ENCODE measurements at regions of chr14 and their contacts with region 1.

Region 1: GRCh38 chr14:91350813-91351511 is 66.7 kb downstream of the CCDC88C start:
- DNase-seq: peak; percentile 90
- ATAC-seq: peak; percentile 74
- H3K4me3 Mint-ChIP-seq: peak overlapping the region; percentile 71
- H3K27ac Mint-ChIP-seq: peak overlapping the region; percentile 97
- H3K4me1 Mint-ChIP-seq: peaks cover 96% of the 10 kb centered on the region
- H3K27me3 Mint-ChIP-seq: no peaks in the 10 kb centered on the region

Region 2: GRCh38 chr14:91164685-91165084 is 186.3 kb before region 1 on chr14:
- CTCF ChIA-PET with region 1: no interaction called
- DNase-seq: no peak
- ATAC-seq: no peak
- H3K4me3 Mint-ChIP-seq: no peak overlapping the region
- H3K27ac Mint-ChIP-seq: peak overlapping the region; percentile 60
- H3K4me1 Mint-ChIP-seq: no peaks in the 10 kb centered on the region
- H3K27me3 Mint-ChIP-seq: no peaks in the 10 kb centered on the region

Region 3: DNA sequence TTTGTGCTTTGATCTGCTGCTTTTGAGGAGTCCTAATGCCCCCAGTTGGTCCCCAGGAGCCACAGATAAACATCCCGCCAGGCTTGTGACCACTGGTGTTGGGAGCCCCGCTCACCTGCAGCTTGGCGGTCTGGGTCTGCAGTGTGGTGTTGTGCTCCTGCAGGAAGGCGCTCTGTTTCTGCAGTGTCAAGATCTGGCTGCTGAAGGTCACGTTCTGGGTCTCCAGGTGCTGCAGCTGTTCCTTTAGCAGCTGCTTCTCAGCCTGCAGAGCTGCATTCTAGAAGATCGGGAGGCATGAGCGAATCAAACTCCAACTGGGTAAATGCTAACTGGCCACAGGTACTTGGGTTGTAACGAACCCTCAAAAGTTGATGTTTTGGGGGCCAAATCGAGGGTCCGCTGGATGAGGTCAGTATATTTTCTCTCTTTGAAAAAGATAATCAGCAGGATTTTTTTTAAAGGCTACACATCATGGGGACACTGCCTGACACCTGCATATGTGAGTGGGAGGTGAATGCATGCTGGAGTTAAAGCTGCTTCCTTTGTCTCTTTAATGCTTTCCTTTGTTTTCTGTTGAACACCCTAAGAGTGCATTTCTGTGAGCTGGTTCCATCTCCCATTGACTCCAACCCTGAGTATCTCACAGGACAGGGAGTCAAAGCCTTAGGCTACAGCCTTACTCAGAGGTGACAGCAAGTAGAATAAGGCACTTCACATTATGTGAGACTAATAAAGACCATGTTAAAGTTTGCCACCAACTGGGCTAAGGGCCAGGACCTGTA is 45.1 kb before region 1 on chr14:
- CTCF ChIA-PET with region 1: no interaction called
- DNase-seq: no peak
- ATAC-seq: no peak
- H3K4me3 Mint-ChIP-seq: no peak overlapping the region
- H3K27ac Mint-ChIP-seq: peak overlapping the region; percentile 44
- H3K4me1 Mint-ChIP-seq: peaks cover 49% of the 10 kb centered on the region
- H3K27me3 Mint-ChIP-seq: no peaks in the 10 kb centered on the region

Region 4: GRCh38 chr14:91317381-91318308 is 33.3 kb before region 1 on chr14:
- CTCF ChIA-PET with region 1: interaction called, 73 read pairs
- DNase-seq: peak; percentile 91
- ATAC-seq: peak; percentile 60
- H3K4me3 Mint-ChIP-seq: peak overlapping the region; percentile 51
- H3K27ac Mint-ChIP-seq: peak overlapping the region; percentile 96
- H3K4me1 Mint-ChIP-seq: peaks cover 78% of the 10 kb centered on the region
- H3K27me3 Mint-ChIP-seq: no peaks in the 10 kb centered on the region

Region 5: DNA sequence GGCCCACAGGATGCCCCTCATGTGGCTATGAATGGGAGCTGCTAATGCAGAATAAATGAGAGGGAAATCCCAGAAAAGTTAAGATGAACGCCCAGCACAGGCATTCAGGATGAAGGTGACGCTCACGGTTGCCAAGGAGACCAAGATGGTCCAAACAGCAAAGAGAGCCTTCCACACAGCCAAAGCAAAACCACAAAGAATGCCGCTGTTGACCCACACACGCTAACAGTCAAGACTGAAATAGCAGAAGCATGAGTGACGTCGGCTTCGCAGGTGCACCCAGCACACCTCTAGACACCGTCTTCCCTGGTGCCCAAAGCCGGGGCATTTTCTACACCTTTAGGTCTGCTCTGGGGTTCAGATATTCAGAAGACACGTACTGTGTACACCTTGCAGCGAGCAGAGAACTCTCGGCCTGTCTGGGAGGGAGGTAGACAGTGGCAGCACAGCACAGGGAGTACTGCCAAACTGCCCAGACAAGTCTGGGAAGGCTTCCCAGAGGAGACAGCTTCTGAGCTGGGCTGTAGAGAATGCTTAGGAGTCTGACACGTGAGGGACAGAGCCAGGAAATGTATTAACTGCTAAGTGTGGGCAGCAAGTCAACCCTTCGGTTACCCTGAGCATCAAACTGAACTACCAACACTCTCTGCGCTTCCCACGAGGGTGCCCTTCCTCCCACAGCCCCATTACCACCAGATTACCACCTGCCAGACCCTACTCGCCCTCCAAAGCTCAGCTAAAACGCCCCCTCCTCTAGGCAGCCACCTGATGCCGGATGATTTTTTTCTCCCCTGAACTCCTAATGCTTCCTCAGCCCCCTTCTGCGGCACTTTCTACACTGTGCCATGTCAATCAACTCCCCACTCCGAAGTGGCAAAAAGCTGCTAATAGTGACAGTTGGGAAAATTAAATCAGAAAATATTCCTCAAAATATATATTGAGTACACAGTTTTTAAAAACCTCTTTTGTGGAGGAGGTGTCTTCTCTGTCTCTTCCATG is 16.5 kb after region 1 on chr14:
- CTCF ChIA-PET with region 1: interaction called, 238 read pairs
- DNase-seq: peak; percentile 82
- ATAC-seq: peak; percentile 58
- H3K4me3 Mint-ChIP-seq: peak overlapping the region; percentile 47
- H3K27ac Mint-ChIP-seq: peak overlapping the region; percentile 70
- H3K4me1 Mint-ChIP-seq: peaks cover 89% of the 10 kb centered on the region
- H3K27me3 Mint-ChIP-seq: no peaks in the 10 kb centered on the region

Region 6: DNA sequence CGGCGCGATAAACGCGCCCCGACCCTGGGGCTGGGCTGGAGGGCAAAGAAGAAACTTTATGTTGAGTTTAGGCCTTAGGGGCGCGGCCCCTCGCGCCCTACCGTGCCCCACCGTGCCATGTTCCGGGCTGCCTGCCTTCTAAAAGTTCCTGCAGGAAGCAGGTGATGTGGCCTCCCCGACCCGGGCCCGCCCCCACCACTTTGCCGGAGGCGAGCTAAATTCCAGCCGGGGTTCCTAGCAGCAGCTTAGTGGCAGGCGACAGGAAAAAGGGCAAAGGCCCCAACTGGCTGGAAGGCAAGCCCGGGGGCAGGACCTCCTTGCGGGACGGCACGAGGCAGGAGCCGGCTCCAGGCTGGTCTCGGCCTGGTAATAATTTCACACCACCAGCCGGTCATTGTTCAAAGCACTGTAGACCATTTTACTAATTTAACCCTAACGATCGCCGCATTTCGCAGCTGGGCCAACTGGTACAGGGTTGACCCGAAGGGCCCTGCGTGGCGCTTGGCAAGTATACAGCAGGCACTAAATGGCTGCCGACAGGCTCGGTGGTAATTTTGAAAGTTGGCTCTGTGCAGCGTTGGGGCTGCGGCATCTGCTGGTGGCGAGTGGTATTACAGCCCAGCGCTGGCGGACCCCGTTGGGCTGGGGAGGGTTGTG is 67.6 kb after region 1 on chr14:
- CTCF ChIA-PET with region 1: interaction called, 65 read pairs
- DNase-seq: peak; percentile 88
- ATAC-seq: peak; percentile 23
- H3K4me3 Mint-ChIP-seq: peak overlapping the region; percentile 68
- H3K27ac Mint-ChIP-seq: peak overlapping the region; percentile 75
- H3K4me1 Mint-ChIP-seq: peaks cover 28% of the 10 kb centered on the region
- H3K27me3 Mint-ChIP-seq: peaks cover 5% of the 10 kb centered on the region

Measured in activated CD8-positive, alpha-beta memory T cell treated with anti-CD3 and anti-CD28 coated beads, Interleukin-2, amount 10 ng/mL, durations not matched to agents 7 days and 5 days (primary cell).